PC-3 (cell line): ENCODE measurements at regions of chr3 and their contacts with region 1.

Region 1: GRCh38 chr3:13106308-13107001 is 33.2 kb upstream of the IQSEC1 start:
- DNase-seq: peak; percentile 98
- ATAC-seq: peak; percentile 71
- H3K4me3 ChIP-seq: no peak overlapping the region
- H3K27ac ChIP-seq: peak overlapping the region; percentile 99
- H3K4me1 ChIP-seq: peaks cover 66% of the 10 kb centered on the region
- H3K27me3 ChIP-seq: no peaks in the 10 kb centered on the region
- CTCF ChIP-seq: no peak

Region 2: DNA sequence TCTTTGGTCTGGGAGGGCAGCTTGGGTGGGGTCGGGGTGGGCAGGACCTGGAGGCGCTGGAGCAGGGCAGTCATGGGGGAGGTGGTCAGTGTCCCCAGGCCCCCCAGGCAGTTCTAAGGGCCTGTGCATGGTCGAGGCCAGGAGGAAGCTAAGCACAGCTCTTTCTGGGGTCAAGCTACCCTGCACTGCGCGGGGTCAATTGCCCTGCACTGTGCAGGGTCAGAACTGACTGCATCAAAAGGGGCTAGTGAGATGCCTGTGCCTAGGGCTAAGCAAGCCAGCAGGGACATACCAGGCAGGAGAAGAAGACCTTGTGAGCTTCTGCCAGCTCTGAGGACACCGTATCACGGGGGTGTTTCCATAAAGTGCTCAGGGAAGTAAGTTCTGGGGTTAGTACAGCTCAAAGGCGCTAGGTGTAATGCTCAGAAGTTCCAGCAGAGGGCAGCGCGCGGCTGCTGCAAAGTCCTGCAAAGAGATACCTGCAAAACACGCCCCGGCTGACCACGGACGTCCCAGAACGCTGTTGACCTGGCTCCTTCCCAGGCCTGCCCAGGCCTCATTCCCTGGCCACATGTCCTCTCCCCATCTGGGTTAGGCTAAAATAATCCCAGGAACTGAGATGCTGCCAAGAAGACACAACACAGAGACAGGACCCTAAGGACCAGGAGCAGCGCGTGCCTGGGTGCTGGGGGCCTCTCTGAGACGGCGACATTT is 14.4 kb before region 1 on chr3:
- CTCF ChIA-PET with region 1: interaction called, 17 read pairs
- POLR2A ChIA-PET with region 1: no interaction called
- intact Hi-C with region 1: loop called (anchors 1 kb)
- DNase-seq: peak; percentile 95
- ATAC-seq: peak; percentile 79
- H3K4me3 ChIP-seq: peak overlapping the region; percentile 22; the same call in 1 of the 2 replicates
- H3K27ac ChIP-seq: peak overlapping the region; percentile 83
- H3K4me1 ChIP-seq: peaks cover 15% of the 10 kb centered on the region
- H3K27me3 ChIP-seq: no peaks in the 10 kb centered on the region
- CTCF ChIP-seq: peak; percentile 94

Region 3: GRCh38 chr3:13161024-13161759 is 54.7 kb after region 1 on chr3:
- CTCF ChIA-PET with region 1: no interaction called
- POLR2A ChIA-PET with region 1: interaction called, 5 read pairs
- intact Hi-C with region 1: loop called (anchors 2 kb)
- DNase-seq: no peak
- ATAC-seq: peak; percentile 21
- H3K4me3 ChIP-seq: no peak overlapping the region
- H3K27ac ChIP-seq: peak overlapping the region; percentile 67
- H3K4me1 ChIP-seq: peaks cover 27% of the 10 kb centered on the region
- H3K27me3 ChIP-seq: no peaks in the 10 kb centered on the region
- CTCF ChIP-seq: peak; percentile 42; the same call in 1 of the 2 replicates

Region 4: GRCh38 chr3:13189639-13190377 is 83.4 kb after region 1 on chr3:
- CTCF ChIA-PET with region 1: no interaction called
- POLR2A ChIA-PET with region 1: no interaction called
- intact Hi-C with region 1: loop called (anchors 1 kb)
- DNase-seq: peak; percentile 84
- ATAC-seq: peak; percentile 77
- H3K4me3 ChIP-seq: no peak overlapping the region
- H3K27ac ChIP-seq: peak overlapping the region; percentile 81
- H3K4me1 ChIP-seq: peaks cover 45% of the 10 kb centered on the region
- H3K27me3 ChIP-seq: no peaks in the 10 kb centered on the region
- CTCF ChIP-seq: no peak

Region 5: DNA sequence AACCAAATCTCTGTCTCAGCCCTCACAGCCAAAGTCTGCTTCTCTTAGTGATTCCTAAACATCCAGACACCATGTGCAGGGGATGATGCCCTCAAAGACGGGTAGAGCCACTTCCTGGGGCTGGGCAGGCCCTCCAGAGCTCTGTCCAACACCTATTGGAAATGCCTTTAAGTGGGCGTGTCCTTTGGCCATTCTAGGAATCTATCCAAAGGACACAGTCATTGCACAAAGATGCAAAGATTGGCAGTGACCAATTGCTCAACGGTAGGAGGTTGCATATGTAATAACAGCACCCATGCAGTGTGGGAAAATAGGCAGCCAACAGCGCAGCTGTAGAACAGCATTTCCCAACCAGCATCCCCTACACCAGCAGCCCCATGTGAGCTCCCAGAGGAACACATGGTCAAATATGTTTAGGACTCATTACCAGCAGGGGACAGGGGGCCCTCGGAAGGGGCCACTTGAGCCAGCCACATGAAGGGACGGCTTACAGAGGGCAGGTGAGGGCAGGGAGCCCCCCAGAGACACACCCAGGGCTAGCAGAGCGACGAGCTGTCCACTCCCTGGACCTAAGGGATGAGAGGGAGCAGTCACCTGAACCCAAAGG is 109.6 kb after region 1 on chr3:
- CTCF ChIA-PET with region 1: no interaction called
- POLR2A ChIA-PET with region 1: no interaction called
- intact Hi-C with region 1: loop called (anchors 1 kb)
- DNase-seq: peak; percentile 98
- ATAC-seq: peak; percentile 61
- H3K4me3 ChIP-seq: no peak overlapping the region
- H3K27ac ChIP-seq: peak overlapping the region; percentile 70
- H3K4me1 ChIP-seq: peaks cover 45% of the 10 kb centered on the region
- H3K27me3 ChIP-seq: no peaks in the 10 kb centered on the region
- CTCF ChIP-seq: no peak

Region 6: GRCh38 chr3:13282986-13283876 is 176.8 kb after region 1 on chr3:
- CTCF ChIA-PET with region 1: no interaction called
- POLR2A ChIA-PET with region 1: interaction called, 4 read pairs
- intact Hi-C with region 1: loop called (anchors 2 kb)
- DNase-seq: peak; percentile 63
- ATAC-seq: peak; percentile 44
- H3K4me3 ChIP-seq: peak overlapping the region; percentile 84
- H3K27ac ChIP-seq: no peak overlapping the region
- H3K4me1 ChIP-seq: peaks cover 15% of the 10 kb centered on the region
- H3K27me3 ChIP-seq: no peaks in the 10 kb centered on the region
- CTCF ChIP-seq: peak; percentile 63

Region 7: DNA sequence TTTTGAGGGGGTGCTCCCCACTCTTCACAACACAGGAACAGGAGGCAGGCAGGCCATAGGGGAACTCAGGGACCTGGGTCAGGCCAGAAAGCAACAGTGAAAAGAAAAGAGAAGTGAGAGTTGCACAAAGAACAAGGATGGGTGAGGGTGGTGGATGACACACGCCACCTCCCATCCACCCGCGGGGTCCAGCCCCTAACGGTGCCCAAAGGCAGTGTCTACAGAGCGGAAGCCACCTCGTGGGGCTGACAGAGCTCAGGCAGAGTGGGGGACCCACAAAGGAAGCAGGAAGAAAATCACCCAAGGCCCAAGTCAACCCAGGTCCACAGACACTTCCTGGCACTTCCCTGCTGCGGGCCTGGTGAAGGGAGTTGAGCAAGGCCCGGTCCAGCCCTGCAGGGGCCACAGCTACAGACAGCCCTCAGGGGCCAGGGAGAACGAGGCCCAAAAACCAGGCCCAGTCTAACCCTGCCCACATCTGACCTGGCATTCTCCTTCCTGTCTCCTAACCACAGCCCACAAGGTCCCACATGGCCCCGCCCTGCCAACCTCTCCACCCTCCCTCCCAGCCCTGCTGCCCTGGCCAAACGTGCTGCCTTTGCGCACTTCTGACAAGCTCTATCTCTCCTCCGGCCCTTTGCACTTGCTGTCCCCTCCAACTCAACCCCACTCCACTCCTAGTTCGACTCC is 307.7 kb after region 1 on chr3:
- CTCF ChIA-PET with region 1: no interaction called
- POLR2A ChIA-PET with region 1: interaction called, 3 read pairs
- intact Hi-C with region 1: loop called (anchors 5 kb)
- DNase-seq: peak; percentile 51
- ATAC-seq: peak; percentile 49
- H3K4me3 ChIP-seq: no peak overlapping the region
- H3K27ac ChIP-seq: peak overlapping the region; percentile 78
- H3K4me1 ChIP-seq: peaks cover 43% of the 10 kb centered on the region
- H3K27me3 ChIP-seq: no peaks in the 10 kb centered on the region
- CTCF ChIP-seq: no peak